Head of caudate nucleus (tissue), 42 donors: ENCODE measurements at regions of chr2 and their contacts with region 1.

Region 1: DNA sequence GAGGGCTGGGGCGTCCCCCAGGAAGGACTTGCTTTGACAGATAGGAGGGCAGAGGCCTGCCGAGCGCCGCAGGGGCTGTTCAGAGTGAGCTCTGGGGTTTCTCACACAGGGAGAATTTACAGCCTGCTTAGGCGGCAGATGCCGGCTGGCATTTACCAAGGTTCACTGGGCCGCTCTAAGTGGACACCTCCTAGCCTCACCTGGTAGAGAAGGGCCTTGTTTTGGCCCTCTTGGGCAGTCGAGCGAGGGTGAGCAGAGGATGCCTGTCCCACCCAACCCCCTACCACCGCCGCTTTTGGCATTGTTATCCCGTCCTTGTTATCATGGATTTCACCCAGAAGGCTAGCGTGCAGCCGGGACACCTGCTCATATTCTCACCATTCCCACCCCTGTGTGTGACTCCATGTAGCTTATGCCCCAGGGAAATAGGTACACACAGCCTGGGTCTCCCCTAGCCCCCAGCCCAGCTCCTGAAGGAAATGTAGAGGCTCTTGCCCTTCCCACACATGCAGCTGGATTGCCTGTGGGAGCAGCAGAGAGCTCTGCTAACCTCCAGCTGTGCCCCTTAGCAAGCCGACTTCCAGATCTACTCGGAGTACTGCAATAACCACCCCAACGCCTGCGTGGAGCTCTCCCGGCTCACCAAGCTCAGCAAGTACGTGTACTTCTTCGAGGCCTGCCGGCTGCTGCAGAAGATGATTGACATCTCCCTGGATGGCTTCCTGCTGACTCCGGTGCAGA is 52.4 kb downstream of the FAM168B start:
- DNase-seq: peak in 40 of 42 donors; percentile 56 to 95 (median 79)

Region 2: GRCh38 chr2:130181325-130181879 is 859.4 kb before region 1 on chr2 and contains the start of gene SMPD4:
- intact Hi-C with region 1: no loop called
- DNase-seq: peak; percentile 88 to 98 (median 96)

Region 3: GRCh38 chr2:130797493-130798435 is 243.1 kb before region 1 on chr2:
- intact Hi-C with region 1: no loop called
- DNase-seq: peak; percentile 77 to 99 (median 95)

Region 4: GRCh38 chr2:130884503-130884902 is 156.3 kb before region 1 on chr2:
- intact Hi-C with region 1: no loop called
- DNase-seq: peak in 3 of 42 donors; percentile 4 to 40 (median 13)

Region 5: GRCh38 chr2:131093006-131093695 is 52.3 kb after region 1 on chr2 and contains the start of gene FAM168B:
- intact Hi-C with region 1: loop called (anchors 5 kb)
- DNase-seq: peak; percentile 52 to 94 (median 86)